ENCODE measurements at regions of chr2 and their contacts with region 1.

Region 1: DNA sequence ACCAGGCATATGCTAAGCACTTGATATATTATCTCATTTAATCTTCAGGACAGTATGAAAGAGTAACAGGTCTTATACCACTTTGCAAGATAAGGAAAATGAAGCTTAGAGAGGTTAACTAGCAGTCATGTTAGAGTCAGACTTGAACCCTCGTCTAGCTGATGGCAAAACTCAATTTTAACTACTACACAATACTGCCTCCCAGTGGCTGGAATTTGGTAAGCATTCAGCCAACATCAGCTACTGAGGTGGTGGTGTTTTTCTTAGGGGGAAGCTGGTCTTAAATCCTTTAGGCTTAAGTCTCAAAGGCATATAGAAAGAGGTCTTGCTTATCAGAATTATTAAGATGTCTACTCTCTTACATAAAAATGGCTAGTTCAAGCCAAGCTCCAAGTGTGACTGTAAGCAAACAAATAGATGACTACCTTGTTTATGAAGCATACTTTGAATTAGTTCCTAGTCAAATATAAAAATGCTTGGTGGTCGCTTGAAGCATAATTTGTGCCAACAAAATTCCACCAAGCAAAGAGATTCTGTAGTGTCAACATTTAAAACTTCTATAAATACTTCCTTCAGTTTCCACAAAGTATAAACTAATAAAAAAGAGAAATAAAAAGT is 325.4 kb upstream of the FIGN start:
- DNase-seq: peak in 1 of 5 donors; percentile 28
- ATAC-seq: peak in 1 of 4 donors; percentile 49
- H3K4me3 ChIP-seq: no peak overlapping the region
- H3K27ac ChIP-seq: no peak overlapping the region
- H3K4me1 ChIP-seq: no peaks in the 10 kb centered on the region
- H3K27me3 ChIP-seq: no peaks in the 10 kb centered on the region
- CTCF ChIP-seq: peak; percentile 36 to 70 (median 58)
- POLR2A ChIP-seq: no peak

Region 2: DNA sequence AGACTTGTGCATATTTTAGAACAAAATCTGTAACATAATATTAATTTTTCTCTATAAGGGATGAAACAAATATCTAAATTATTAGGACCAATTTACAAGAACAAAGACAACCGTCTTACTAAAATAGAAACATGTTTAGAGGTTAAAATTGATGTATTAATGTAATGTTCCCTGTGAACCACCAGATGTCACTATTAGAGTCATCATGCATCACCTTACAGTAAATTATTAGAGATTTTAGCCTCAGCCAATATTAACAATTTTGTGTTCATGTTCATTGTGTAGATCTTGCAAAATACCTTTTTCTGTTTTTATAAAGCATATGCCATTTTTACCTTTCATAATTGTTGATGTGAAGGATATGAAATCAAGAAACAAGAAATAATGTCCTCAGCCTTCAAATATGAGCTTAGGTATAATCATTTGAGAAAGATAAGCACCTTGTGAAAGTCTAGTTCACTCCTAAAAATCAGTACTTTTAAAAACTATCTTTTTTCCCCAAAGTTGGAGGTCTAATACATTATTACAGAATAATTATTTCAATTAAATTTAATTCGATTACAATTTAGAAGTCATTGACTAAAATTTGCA is 878.4 kb before region 1 on chr2:
- intact Hi-C with region 1: loop called in 1 of 10 experiments (anchors 10 kb)
- DNase-seq: no peak
- ATAC-seq: no peak
- H3K4me3 ChIP-seq: no peak overlapping the region
- H3K27ac ChIP-seq: no peak overlapping the region
- H3K4me1 ChIP-seq: no peaks in the 10 kb centered on the region
- H3K27me3 ChIP-seq: peaks cover 0 to 9% (median 0%) of the 10 kb centered on the region in 9 donors
- CTCF ChIP-seq: peak; percentile 30 to 68 (median 56)
- POLR2A ChIP-seq: no peak

Region 3: GRCh38 chr2:163191372-163191771 is 869.9 kb before region 1 on chr2:
- intact Hi-C with region 1: loop called in 2 of 10 experiments (anchors 5 to 10 kb)
- DNase-seq: no peak
- ATAC-seq: no peak
- H3K4me3 ChIP-seq: no peak overlapping the region
- H3K27ac ChIP-seq: no peak overlapping the region
- H3K4me1 ChIP-seq: no peaks in the 10 kb centered on the region
- H3K27me3 ChIP-seq: no peaks in the 10 kb centered on the region
- CTCF ChIP-seq: peak; percentile 36 to 69 (median 52)
- POLR2A ChIP-seq: no peak

Region 4: GRCh38 chr2:163465440-163465839 is 595.8 kb before region 1 on chr2:
- intact Hi-C with region 1: loop called in 2 of 10 experiments (anchors 10 kb)
- DNase-seq: no peak
- ATAC-seq: peak in 3 of 4 donors; percentile 62 to 72 (median 67)
- H3K4me3 ChIP-seq: no peak overlapping the region
- H3K27ac ChIP-seq: no peak overlapping the region
- H3K4me1 ChIP-seq: peaks cover 0 to 25% (median 2%) of the 10 kb centered on the region in 12 donors
- H3K27me3 ChIP-seq: no peaks in the 10 kb centered on the region
- CTCF ChIP-seq: no peak
- POLR2A ChIP-seq: no peak

Region 5: DNA sequence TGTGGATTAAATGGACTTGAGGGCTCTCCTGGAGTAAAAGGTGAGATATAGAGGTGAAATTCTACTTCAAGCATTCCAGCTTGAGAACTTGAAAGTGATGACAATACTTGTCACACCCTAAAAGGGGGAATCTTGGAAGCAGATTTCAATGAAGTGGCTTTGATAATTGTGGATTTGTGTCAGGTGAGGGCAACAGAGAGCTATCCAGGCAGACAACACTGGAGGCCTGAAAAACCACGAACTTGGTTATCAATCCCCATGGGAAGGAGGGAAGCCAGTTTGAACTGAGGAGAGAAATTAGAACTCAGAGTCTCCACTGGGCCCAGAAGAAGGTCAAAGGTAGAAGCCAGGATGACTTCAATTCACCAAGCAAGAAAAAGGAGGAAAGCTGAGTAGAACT is 589.3 kb before region 1 on chr2:
- intact Hi-C with region 1: loop called in 2 of 10 experiments (anchors 10 kb)
- DNase-seq: no peak
- ATAC-seq: peak; percentile 32 to 70 (median 52)
- H3K4me3 ChIP-seq: no peak overlapping the region
- H3K27ac ChIP-seq: no peak overlapping the region
- H3K4me1 ChIP-seq: peaks cover 0 to 19% (median 0%) of the 10 kb centered on the region in 12 donors
- H3K27me3 ChIP-seq: no peaks in the 10 kb centered on the region
- CTCF ChIP-seq: peak in 10 of 12 donors; percentile 17 to 56 (median 37)
- POLR2A ChIP-seq: no peak

Region 6: GRCh38 chr2:163970058-163970813 is 91.0 kb before region 1 on chr2:
- intact Hi-C with region 1: no loop called
- DNase-seq: peak in 1 of 5 donors; percentile 10
- ATAC-seq: peak; percentile 49 to 90 (median 68)
- H3K4me3 ChIP-seq: no peak overlapping the region
- H3K27ac ChIP-seq: peak overlapping the region in 4 of 12 donors; percentile 29 to 52 (median 32)
- H3K4me1 ChIP-seq: peaks cover 0 to 9% (median 0%) of the 10 kb centered on the region in 12 donors
- H3K27me3 ChIP-seq: no peaks in the 10 kb centered on the region
- CTCF ChIP-seq: no peak
- POLR2A ChIP-seq: no peak

Measured in heart left ventricle (tissue), 16 donors.